Activated naive CD8-positive, alpha-beta T cell treated with anti-CD3 and anti-CD28 coated beads, Interleukin-2, amount 10 ng/mL, durations not matched to agents 7 days and 5 days (primary cell): ENCODE measurements at regions of chr19 and their contacts with region 1.

Region 1: DNA sequence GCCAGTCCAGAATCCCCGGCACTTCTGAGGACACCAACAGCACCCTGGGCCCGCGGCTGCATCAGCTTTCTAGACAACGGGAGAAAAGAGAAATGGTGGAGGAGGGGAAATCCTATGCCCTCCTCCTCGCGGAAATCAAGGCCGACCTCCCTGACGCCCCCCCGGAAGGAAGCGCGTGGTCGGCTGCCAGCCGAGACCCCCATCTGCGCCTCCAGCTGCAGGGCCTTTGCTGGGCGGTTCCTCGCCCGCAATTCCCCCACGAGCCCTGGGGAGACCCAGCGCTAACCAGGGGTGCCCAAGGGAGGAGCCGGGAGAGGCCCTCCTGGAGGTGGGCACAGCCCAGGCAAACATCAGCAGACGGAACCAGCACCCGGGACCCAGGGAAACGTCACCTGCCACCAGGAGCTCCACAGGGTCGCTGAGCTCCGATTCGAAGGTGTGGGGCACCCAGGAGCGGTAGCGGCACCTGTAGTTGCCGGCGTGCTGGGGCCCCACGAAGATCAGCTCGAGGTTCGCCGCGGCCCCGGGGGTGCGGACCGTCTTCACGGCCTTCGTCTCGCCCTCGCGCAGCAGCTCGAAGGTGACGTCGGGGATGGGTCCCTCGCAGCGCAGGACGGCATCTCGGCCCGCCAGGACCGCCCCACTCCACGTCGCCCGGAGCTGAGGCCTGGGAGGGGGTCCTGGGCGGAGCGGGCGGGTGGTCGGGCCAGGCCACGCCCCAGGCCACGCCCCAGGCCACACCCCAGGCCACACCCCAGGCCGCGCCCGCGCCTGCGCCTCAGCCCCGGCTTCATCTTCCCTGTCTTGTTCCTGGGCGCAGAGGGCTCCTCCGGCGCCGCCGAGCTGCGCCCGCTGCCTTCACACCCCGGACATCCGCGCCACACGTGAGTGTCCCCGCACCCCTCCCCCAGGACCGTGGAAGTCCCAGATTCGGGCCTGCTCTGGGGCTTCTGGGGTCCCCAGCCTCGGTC is 6.0 kb downstream of the A1BG start:
- DNase-seq: peak; percentile 83
- ATAC-seq: peak; percentile 87
- H3K4me3 Mint-ChIP-seq: peak overlapping the region; percentile 98
- H3K27ac Mint-ChIP-seq: peak overlapping the region; percentile 92
- H3K4me1 Mint-ChIP-seq: peaks cover 22% of the 10 kb centered on the region
- H3K27me3 Mint-ChIP-seq: no peaks in the 10 kb centered on the region

Region 2: GRCh38 chr19:58315580-58315979 is 31.7 kb before region 1 on chr19:
- POLR2A ChIA-PET with region 1: no interaction called
- DNase-seq: no peak
- ATAC-seq: no peak
- H3K4me3 Mint-ChIP-seq: no peak overlapping the region
- H3K27ac Mint-ChIP-seq: no peak overlapping the region
- H3K4me1 Mint-ChIP-seq: peaks cover 2% of the 10 kb centered on the region
- H3K27me3 Mint-ChIP-seq: no peaks in the 10 kb centered on the region

Region 3: DNA sequence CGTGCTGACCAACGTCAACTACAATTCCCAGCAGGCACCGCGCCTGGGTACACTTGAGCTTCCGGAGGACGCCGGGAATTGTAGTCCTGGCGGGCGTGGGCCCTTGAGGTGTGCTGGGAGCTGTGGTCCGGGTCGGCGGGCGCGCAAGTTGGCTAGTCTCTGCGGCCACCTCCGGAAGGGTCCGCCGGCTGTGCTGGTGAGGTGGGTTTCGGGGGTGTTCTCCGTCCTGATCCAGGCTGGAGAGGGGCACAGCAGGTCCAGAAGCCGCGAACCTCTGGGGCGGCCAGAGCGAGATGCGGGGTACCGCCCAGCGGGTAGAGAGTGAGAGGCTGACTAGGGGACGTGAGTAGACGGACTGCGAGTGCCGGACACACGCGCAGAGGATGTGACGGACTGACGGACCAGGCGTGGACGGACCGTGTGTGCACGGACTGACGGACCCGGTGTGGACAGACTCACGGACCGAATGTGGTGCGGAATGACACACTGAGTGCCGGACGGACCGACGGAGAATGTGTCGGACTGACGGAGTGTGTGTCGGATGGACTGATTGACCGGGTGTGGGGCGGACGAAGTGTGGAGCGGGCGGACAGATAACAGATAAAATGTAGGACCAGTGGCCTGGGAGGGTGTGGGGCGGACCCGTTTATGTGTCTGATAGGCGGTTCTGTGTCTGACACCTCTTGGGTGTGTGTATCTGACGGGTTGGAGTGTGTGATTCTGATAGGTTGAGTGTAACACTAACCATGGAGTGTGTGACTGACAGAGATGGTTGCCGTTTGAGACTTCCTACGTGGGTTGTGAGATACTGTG is 20.1 kb before region 1 on chr19 and contains the start of gene ZSCAN22:
- POLR2A ChIA-PET with region 1: interaction called, 17 read pairs
- DNase-seq: peak; percentile 89
- ATAC-seq: peak; percentile 88
- H3K4me3 Mint-ChIP-seq: no peak within 1 kb of the TSS
- H3K27ac Mint-ChIP-seq: no peak within 1 kb of the TSS
- H3K4me1 Mint-ChIP-seq: peaks cover 7% of the 10 kb centered on the region
- H3K27me3 Mint-ChIP-seq: no peaks in the 10 kb centered on the region
- total RNA-seq, gene ZSCAN22: 6.3 TPM

Region 4: DNA sequence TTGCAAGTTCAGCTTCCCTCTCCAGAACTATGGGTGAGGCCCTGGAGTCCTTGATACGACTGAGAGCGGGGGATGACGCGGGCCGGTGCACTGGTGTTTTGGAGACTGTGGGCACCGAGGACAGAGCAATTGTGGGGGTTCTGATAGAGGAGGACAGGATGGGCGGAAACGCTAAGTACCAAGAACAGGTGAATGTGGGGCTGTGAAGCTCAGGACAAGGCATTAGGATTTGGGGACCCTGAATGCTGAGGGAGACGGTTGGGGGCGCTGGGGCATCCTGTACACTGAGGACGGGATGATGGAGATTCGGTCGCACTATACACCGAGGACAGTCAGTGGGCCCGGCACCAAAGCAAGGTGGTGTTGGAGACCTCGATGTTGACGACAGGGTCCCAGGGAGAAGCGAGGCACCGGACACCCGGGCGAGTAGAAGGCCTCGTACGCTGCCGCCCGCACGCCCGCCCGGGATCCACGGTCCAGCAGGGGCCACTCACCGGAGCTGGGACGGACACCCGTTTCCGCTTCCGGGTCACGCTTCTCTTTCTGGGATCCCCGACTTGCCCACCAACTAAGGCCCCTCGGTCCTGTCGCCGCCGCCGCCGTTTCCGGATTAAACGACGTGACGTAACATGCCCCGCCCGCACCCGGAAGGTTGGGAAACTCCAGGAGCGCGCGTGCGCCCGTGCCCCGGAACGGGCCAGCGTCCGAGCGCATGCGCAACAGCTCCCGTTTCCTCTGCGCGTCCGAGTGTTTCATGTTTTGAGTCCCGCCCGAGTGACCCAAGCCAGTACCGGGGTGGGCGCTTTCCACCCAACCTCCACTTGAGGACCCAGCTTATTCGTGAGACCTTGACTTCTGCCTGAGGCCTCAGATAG is 207.5 kb after region 1 on chr19 and contains the start of gene CHMP2A:
- POLR2A ChIA-PET with region 1: no interaction called
- DNase-seq: peak; percentile 98
- ATAC-seq: peak; percentile 45
- H3K4me3 Mint-ChIP-seq: peak within 1 kb of the TSS; percentile 96
- H3K27ac Mint-ChIP-seq: peak within 1 kb of the TSS; percentile 98
- H3K4me1 Mint-ChIP-seq: peaks cover 33% of the 10 kb centered on the region
- H3K27me3 Mint-ChIP-seq: no peaks in the 10 kb centered on the region
- total RNA-seq, gene CHMP2A: 99.0 to 111 TPM